ENCODE measurements at regions of chr6 and their contacts with region 1.

Region 1: GRCh38 chr6:37566111-37566949 is 66.6 kb upstream of the CCDC167 start:
- DNase-seq: peak; percentile 36 to 89 (median 77)

Region 2: GRCh38 chr6:37483917-37484785 is 82.2 kb before region 1 on chr6:
- intact Hi-C with region 1: loop called (anchors 5 kb)
- DNase-seq: peak; percentile 47 to 88 (median 80)

Region 3: GRCh38 chr6:37499433-37500293 is 66.7 kb before region 1 on chr6 and contains the start of gene CCDC167:
- intact Hi-C with region 1: loop called (anchors 5 kb)
- DNase-seq: peak; percentile 91 to 98 (median 95)